RWPE1 (cell line): ENCODE measurements at regions of chr1 and their contacts with region 1.

Region 1: GRCh38 chr1:75615613-75616435 is 4.9 kb upstream of the SLC44A5 start:
- DNase-seq: peak; percentile 46
- H3K27ac ChIP-seq: no peak overlapping the region
- CTCF ChIP-seq: no peak

Region 2: DNA sequence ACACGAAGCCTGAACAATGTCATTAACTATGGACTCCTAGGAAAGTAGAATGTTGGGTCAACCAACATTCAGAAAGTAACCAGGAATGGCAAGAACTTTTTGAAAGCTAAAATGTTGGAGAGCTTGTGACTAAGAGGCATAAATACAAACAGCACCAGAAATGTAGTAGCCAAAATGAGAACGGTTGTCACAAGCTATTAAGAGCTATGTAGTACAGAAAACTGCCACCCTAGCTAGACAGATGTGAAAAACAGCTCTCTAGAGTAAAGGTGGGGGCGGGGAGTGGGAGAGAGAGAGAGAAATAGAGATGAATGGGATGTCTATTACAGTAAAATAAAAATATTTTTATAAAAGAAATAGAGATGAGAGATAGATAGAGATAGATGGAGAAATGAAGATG is 40.0 kb before region 1 on chr1:
- CTCF ChIA-PET with region 1: no interaction called
- POLR2A ChIA-PET with region 1: interaction called, 10 read pairs
- DNase-seq: no peak
- H3K27ac ChIP-seq: no peak overlapping the region
- CTCF ChIP-seq: no peak